H1 (cell line): ENCODE measurements at regions of chr7 and their contacts with region 1.

Region 1: GRCh38 chr7:2608921-2609411 is 22.8 kb upstream of the TTYH3 start:
- DNase-seq: no peak
- H3K4me3 ChIP-seq: no peak overlapping the region
- H3K27ac ChIP-seq: no peak overlapping the region
- H3K4me1 ChIP-seq: peaks cover 0 to 17% (median 14%) of the 10 kb centered on the region in 4 experiments; a peak in 5 of 7 replicates
- H3K27me3 ChIP-seq: no peaks in the 10 kb centered on the region
- CTCF ChIP-seq: peak in 2 of 3 experiments; percentile 59 to 73; a peak in 3 of 4 replicates
- EP300 ChIP-seq: no peak
- POLR2A ChIP-seq: no peak
- RAD21 ChIP-seq: peak; percentile 50 to 66

Region 2: GRCh38 chr7:2597273-2597640 is 11.7 kb before region 1 on chr7:
- CTCF ChIA-PET with region 1: interaction called, 13 read pairs
- POLR2A ChIA-PET with region 1: interaction called, 3 read pairs
- DNase-seq: no peak
- H3K4me3 ChIP-seq: no peak overlapping the region
- H3K27ac ChIP-seq: no peak overlapping the region
- H3K4me1 ChIP-seq: peaks cover 0 to 3% (median 1%) of the 10 kb centered on the region in 4 experiments; a peak in 2 of 7 replicates
- H3K27me3 ChIP-seq: no peaks in the 10 kb centered on the region
- CTCF ChIP-seq: no peak
- EP300 ChIP-seq: no peak
- POLR2A ChIP-seq: no peak
- RAD21 ChIP-seq: no peak

Region 3: DNA sequence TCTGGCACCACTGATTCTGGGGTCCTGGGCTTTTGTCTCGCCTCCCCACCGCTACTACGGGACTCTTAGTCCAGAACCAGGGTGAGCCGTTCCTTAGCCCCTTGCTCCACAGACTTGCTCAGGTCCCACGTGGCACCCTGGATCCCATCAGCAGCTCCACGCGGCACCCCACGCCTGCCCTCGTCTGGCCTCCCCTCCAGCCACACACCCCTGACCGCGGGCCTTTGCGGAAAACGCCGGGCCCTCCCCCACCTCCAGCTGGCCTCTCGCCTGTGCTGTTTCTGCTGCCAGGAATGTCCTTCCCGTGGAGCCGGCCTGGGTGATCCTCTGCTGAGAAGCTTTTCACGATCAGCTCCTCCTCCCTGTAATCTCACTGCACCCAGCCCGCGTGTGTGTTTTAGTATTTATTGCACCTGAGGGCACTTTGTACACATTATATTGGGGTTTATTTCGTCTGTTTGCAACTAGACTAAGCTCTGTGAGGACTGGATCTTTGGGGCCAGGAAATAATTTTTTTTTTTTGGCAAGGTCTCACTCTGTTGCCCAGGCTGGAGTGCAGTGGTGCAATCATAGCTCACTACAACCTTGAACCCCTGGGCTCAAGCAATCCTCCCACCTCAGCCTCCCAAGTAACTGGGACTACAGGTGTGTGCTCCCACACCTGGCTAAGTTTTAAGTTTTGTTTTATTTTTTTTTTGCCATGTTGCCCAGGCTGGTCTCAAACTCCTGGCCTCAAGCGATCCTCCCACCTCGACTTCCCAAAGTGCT is 12.3 kb after region 1 on chr7:
- CTCF ChIA-PET with region 1: interaction called, 24 read pairs
- POLR2A ChIA-PET with region 1: interaction called, 5 read pairs
- DNase-seq: peak in 1 of 2 experiments; percentile 70
- H3K4me3 ChIP-seq: peak overlapping the region in 1 of 4 experiments; percentile 23; a peak in 1 of 8 replicates
- H3K27ac ChIP-seq: no peak overlapping the region
- H3K4me1 ChIP-seq: peaks cover 0 to 37% (median 23%) of the 10 kb centered on the region in 4 experiments; a peak in 6 of 7 replicates
- H3K27me3 ChIP-seq: 0 out of 7 replicates have a peak, but pooled peaks cover 0 to 2% (median 0%) of the 10 kb centered on the region in 4 experiments
- CTCF ChIP-seq: no peak
- EP300 ChIP-seq: no peak
- POLR2A ChIP-seq: no peak
- RAD21 ChIP-seq: no peak

Region 4: DNA sequence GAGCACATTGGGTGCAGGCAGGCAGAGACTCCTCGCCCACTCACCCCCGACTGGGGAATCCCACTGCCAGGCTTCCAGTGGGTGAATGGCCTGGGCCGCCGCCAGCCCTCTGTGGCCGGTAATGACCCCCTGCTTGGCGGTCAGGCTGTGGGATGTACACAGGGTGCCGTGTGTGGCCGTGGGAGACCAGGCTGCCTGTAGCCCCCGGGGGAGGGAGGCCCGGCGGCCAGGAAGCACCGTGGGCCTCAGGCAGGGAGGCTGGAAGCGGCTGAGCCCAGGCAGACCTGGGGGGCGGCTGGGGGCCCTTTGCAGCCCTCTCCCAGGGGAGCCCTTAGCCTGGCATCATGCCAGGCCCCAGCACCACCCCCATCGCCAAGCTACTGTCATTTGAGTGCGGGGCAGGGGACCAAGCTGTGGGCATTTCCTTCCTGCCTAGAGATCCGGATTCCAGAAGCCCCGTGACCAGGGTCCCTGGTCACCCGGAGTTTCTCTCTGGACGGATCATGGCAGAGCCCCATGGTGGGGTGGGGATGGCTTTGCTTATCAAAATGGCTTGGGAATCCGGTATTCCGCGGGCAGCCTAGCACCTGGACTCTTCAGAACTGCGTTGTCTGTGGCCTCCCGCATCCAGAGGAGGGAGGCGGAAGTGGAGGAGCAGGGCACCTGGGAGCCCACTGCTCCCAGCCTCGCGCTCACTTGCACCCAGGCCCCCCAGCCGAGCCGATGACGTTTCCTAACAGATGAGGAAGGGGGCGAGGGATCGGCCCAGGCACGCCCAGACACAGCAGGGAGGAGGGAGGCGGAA is 24.0 kb after region 1 on chr7:
- CTCF ChIA-PET with region 1: interaction called, 25 read pairs
- POLR2A ChIA-PET with region 1: interaction called, 30 read pairs
- DNase-seq: no peak
- H3K4me3 ChIP-seq: peak overlapping the region; percentile 59 to 99 (median 82)
- H3K27ac ChIP-seq: 0 out of 2 replicates have a peak overlapping the region, but pooled peaks have one; percentile 12
- H3K4me1 ChIP-seq: peaks cover 0 to 29% (median 13%) of the 10 kb centered on the region in 4 experiments; a peak in 6 of 7 replicates
- H3K27me3 ChIP-seq: no peaks in the 10 kb centered on the region
- CTCF ChIP-seq: no peak
- EP300 ChIP-seq: no peak
- POLR2A ChIP-seq: no peak
- RAD21 ChIP-seq: no peak

Region 5: GRCh38 chr7:2660585-2661408 is 51.8 kb after region 1 on chr7:
- CTCF ChIA-PET with region 1: interaction called, 17 read pairs
- POLR2A ChIA-PET with region 1: interaction called, 4 read pairs
- DNase-seq: peak in 1 of 2 experiments; percentile 71
- H3K4me3 ChIP-seq: no peak overlapping the region
- H3K27ac ChIP-seq: no peak overlapping the region
- H3K4me1 ChIP-seq: peaks cover 0 to 4% (median under 1%) of the 10 kb centered on the region in 4 experiments; a peak in 2 of 7 replicates
- H3K27me3 ChIP-seq: no peaks in the 10 kb centered on the region; a peak in 2 of 7 replicates
- CTCF ChIP-seq: peak in 2 of 3 experiments; percentile 50 to 60; a peak in 3 of 4 replicates
- EP300 ChIP-seq: no peak
- POLR2A ChIP-seq: no peak
- RAD21 ChIP-seq: peak; percentile 34 to 48; a peak in 3 of 4 replicates